Mammary epithelial cell (primary cell): ENCODE measurements at regions of chr4 and their contacts with region 1.

Region 1: DNA sequence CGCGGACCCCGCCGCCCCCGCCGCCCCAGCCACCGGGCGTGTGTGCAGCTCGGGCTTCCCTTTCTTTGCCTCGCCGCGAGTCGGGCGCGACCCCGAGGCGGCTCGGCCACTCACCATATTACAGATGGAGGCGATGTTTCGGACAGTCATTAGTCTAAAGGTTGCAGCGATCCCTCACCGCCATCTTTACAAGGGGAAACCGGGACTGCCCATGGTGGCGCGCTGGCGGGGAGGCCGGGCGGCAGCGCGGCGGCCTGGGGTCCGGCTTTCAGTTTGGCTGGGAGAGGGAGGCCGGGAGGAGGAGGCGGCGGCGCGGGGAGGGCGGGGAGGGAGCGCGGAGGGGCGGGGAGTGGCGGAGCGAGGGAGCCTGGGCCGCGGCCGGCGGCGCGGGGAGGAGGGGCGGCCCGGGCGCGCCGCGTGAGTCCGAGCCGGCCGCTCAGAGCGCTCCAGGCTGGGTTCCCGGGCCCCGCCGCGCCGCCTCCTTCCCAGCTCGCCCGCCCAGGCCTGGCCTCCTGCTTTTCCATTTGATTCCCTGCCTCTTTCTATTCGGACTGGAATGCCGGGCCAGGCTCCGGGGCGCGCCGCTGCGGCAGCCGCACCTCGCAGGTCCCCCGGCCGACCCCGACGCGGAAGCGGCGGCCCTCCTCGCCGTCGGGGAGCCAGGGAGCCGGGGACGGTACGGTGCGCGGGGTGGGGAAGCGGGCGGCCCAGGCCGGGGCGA is at the start of gene USP46:
- DNase-seq: peak; percentile 70
- H3K4me3 ChIP-seq: peak within 1 kb of the TSS; percentile 72 to 85 (median 83)
- H3K27ac ChIP-seq: peak within 1 kb of the TSS; percentile 77
- H3K4me1 ChIP-seq: peaks cover 10% of the 10 kb centered on the region
- H3K27me3 ChIP-seq: no peaks in the 10 kb centered on the region
- CTCF ChIP-seq: no peak
- total RNA-seq, gene USP46: 15.2 to 24.9 TPM

Region 2: GRCh38 chr4:52376132-52376704 is 282.9 kb before region 1 on chr4:
- CTCF ChIA-PET with region 1: no interaction called
- dilution Hi-C with region 1: no loop called
- in situ Hi-C with region 1: no loop called
- intact Hi-C with region 1: loop called (anchors 1 kb)
- DNase-seq: peak; percentile 29
- H3K4me3 ChIP-seq: no peak overlapping the region
- H3K27ac ChIP-seq: no peak overlapping the region
- H3K4me1 ChIP-seq: no peaks in the 10 kb centered on the region
- H3K27me3 ChIP-seq: no peaks in the 10 kb centered on the region
- CTCF ChIP-seq: peak; percentile 37 to 55

Region 3: GRCh38 chr4:52529983-52530382 is 129.2 kb before region 1 on chr4:
- CTCF ChIA-PET with region 1: no interaction called
- dilution Hi-C with region 1: no loop called
- in situ Hi-C with region 1: no loop called
- intact Hi-C with region 1: no loop called
- DNase-seq: no peak
- H3K4me3 ChIP-seq: no peak overlapping the region
- H3K27ac ChIP-seq: no peak overlapping the region
- H3K4me1 ChIP-seq: no peaks in the 10 kb centered on the region
- H3K27me3 ChIP-seq: no peaks in the 10 kb centered on the region
- CTCF ChIP-seq: no peak

Region 4: DNA sequence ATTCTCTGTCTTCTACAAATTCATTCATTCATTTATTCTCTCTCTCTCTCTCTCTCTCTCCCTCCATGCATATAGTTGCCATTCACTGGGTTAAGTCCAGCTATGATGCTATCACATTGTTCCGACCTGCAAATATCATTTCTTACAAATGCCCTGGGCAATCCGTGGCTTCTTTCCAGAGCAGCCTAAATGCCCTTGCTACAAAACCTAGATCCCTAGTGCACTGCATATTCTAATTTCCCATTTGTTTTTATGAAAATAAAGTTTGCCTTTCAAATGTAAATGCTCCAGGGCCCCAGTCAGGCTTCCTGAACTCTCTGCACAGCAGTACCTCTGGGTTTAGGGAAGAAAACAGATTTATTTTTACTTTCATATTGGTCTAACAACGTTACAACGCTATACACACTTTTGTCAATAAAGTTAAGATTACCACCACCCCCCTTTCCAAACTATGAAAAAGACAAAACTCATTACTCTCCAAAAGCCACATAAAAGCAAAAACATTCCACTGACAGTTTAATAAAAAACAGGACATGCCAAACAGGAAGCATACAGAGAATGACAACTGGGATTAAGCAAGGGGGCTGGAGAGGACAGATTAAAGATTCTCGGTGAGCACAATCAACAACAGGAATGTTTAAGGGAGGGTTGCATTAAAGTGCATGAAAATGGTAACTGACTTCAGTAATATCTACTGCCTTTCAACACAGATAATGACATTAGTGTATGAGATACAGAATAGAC is 104.4 kb before region 1 on chr4:
- CTCF ChIA-PET with region 1: no interaction called
- dilution Hi-C with region 1: loop called (anchors 5 kb)
- in situ Hi-C with region 1: loop called in 1 of 2 experiments (anchors 10 kb)
- intact Hi-C with region 1: no loop called
- DNase-seq: no peak
- H3K4me3 ChIP-seq: no peak overlapping the region
- H3K27ac ChIP-seq: no peak overlapping the region
- H3K4me1 ChIP-seq: peaks cover 30% of the 10 kb centered on the region
- H3K27me3 ChIP-seq: no peaks in the 10 kb centered on the region
- CTCF ChIP-seq: no peak

Region 5: DNA sequence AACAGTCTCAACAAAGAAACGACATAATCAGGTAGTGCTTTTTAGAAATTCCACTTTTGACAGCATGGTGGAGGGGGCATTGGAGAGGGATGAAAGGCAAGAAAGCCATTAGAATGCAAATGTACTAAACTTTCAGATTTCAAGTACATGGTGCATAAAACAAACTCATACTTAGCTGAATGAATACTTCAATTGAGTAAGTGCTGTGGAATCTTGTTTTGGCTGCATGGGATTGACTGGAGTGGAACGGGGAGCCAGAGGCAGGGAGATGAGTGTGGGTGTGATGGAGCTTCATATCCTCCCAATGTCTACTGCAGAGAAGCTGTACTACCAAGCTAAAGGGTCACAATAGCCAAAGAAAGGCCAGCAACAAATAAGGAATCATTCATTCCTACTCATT is 52.4 kb before region 1 on chr4:
- CTCF ChIA-PET with region 1: no interaction called
- dilution Hi-C with region 1: loop called (anchors 5 kb)
- in situ Hi-C with region 1: no loop called
- intact Hi-C with region 1: no loop called
- DNase-seq: no peak
- H3K4me3 ChIP-seq: no peak overlapping the region
- H3K27ac ChIP-seq: no peak overlapping the region
- H3K4me1 ChIP-seq: no peaks in the 10 kb centered on the region
- H3K27me3 ChIP-seq: no peaks in the 10 kb centered on the region
- CTCF ChIP-seq: no peak

Region 6: GRCh38 chr4:52641854-52642563 is 17.2 kb before region 1 on chr4:
- CTCF ChIA-PET with region 1: no interaction called
- dilution Hi-C with region 1: no loop called
- in situ Hi-C with region 1: no loop called
- intact Hi-C with region 1: loop called (anchors 1 kb)
- DNase-seq: peak; percentile 81
- H3K4me3 ChIP-seq: no peak overlapping the region
- H3K27ac ChIP-seq: peak overlapping the region; percentile 57
- H3K4me1 ChIP-seq: peaks cover 24% of the 10 kb centered on the region
- H3K27me3 ChIP-seq: no peaks in the 10 kb centered on the region
- CTCF ChIP-seq: no peak

Region 7: DNA sequence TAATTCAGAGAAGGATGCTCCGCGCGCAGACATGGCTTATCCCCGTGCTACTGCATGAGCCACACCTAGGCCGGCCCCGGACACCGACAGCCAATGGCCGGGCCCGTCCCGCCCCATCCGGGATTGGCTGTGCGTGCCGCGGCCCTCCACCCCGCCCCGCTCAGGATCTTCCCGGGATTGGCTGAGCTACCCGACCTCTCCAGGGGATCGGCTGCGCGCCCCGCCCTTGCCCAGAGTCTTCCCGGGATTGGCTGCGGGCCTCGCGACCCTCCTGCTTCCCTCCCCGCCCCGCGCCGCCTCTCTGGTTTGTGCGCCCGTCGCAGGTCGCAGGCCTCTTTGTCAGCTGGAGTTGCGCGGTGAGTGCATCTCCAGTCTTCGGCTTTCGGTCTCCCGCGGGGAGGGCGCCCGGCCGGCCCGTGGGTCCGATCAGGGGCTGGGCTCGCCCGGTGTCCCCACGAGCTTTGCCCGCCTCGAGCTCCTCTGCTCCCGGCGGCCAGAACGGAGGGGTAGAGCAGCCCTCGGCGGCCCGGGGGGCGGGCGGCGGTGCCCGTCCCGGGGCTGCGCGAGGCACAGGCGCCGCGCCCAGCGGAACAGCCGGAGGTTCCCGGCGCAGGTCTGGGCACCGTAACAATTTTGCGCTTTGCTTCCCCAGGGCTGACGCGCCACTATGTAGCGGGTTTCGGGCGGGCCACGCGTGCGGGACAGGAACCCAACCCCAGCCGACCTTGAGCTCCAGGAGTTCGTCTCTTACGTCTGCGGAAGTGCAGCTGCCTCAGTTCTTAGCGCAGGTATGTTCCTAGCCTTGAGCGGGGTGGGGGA is 53.2 kb after region 1 on chr4:
- CTCF ChIA-PET with region 1: no interaction called
- dilution Hi-C with region 1: no loop called
- in situ Hi-C with region 1: no loop called
- intact Hi-C with region 1: loop called (anchors 5 kb)
- DNase-seq: peak; percentile 97
- H3K4me3 ChIP-seq: peak overlapping the region; percentile 80 to 85 (median 82)
- H3K27ac ChIP-seq: peak overlapping the region; percentile 84
- H3K4me1 ChIP-seq: peaks cover 31% of the 10 kb centered on the region
- H3K27me3 ChIP-seq: no peaks in the 10 kb centered on the region
- CTCF ChIP-seq: no peak

Region 8: GRCh38 chr4:52750819-52751486 is 91.8 kb after region 1 on chr4 and contains the start of gene ERVMER34-1:
- CTCF ChIA-PET with region 1: no interaction called
- dilution Hi-C with region 1: no loop called
- in situ Hi-C with region 1: no loop called
- intact Hi-C with region 1: no loop called
- DNase-seq: peak; percentile 54
- H3K4me3 ChIP-seq: peak within 1 kb of the TSS; percentile 51 to 62 (median 60)
- H3K27ac ChIP-seq: peak within 1 kb of the TSS; percentile 38
- H3K4me1 ChIP-seq: peaks cover 11% of the 10 kb centered on the region
- H3K27me3 ChIP-seq: no peaks in the 10 kb centered on the region
- CTCF ChIP-seq: no peak
- total RNA-seq, gene ERVMER34-1: 5.7 to 6.6 TPM